ENCODE measurements at regions of chr20 and their contacts with region 1.

Region 1: GRCh38 chr20:38633577-38634093 is 32.0 kb downstream of the ARHGAP40 start:
- DNase-seq: peak; percentile 54 to 82
- ATAC-seq: peak; percentile 90 to 94
- H3K4me3 ChIP-seq: no peak overlapping the region
- H3K27ac ChIP-seq: no peak overlapping the region
- H3K4me1 ChIP-seq: peaks cover 14% of the 10 kb centered on the region; the same call in 1 of the 3 replicates
- CTCF ChIP-seq: peak; percentile 71
- EP300 ChIP-seq: no peak
- POLR2A ChIP-seq: no peak
- RAD21 ChIP-seq: peak; percentile 52 to 55; a peak in 4 of 5 replicates

Region 2: GRCh38 chr20:38623061-38623460 is 10.6 kb before region 1 on chr20:
- CTCF ChIA-PET with region 1: interaction called, 21 read pairs
- POLR2A ChIA-PET with region 1: no interaction called
- DNase-seq: no peak
- ATAC-seq: no peak
- H3K4me3 ChIP-seq: no peak overlapping the region
- H3K27ac ChIP-seq: no peak overlapping the region
- H3K4me1 ChIP-seq: no peaks in the 10 kb centered on the region
- CTCF ChIP-seq: no peak
- EP300 ChIP-seq: no peak
- POLR2A ChIP-seq: no peak
- RAD21 ChIP-seq: no peak

Region 3: GRCh38 chr20:38730989-38731737 is 97.5 kb after region 1 on chr20:
- CTCF ChIA-PET with region 1: interaction called, 18 read pairs
- POLR2A ChIA-PET with region 1: no interaction called
- DNase-seq: peak; percentile 79 to 93
- ATAC-seq: peak; percentile 79 to 92
- H3K4me3 ChIP-seq: peak overlapping the region; percentile 57
- H3K27ac ChIP-seq: peak overlapping the region; percentile 59; a peak in 5 of 6 replicates
- H3K4me1 ChIP-seq: peaks cover 5% of the 10 kb centered on the region; the same call in 1 of the 3 replicates
- CTCF ChIP-seq: peak; percentile 84
- EP300 ChIP-seq: no peak
- POLR2A ChIP-seq: 0 out of 2 replicates have a peak, but pooled peaks have one; percentile 5
- RAD21 ChIP-seq: peak; percentile 56 to 60